PC-9 (cell line): ENCODE measurements at regions of chr9 and their contacts with region 1.

Region 1: DNA sequence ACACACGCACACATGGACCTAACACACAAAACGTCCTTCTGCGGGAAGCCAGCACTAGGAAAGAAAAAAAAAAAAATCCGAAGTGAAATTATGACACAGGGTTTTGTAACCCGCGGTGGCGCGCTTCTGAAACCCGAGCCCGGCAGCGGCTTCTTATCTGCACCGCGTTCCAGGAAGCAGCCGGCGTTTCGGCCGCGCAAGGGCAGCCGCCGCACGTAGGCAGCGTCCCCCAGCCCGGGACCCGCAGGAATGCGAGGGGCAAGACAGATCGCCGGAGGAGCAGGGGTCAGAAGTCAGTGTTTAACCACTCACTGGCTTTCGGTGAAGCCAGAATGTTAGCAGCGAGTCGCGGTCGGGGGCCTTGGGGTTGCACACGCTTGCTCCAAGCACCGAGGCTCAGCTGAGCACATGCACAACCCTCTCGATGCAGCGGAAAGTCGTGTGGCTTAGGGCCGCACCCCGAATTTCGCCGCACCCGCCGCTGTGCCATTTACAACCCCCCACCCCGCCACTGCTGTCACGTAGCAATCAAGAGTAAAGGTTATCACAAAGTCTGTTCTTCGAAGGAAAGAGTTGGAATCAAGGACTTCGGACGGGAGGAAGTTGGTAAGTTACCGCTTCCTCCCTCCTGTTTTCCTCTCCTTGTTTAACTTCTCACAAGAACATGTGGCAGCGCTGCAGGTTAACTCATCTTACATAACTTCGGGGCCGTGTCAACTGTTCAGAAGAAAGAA is 167.9 kb downstream of the AUH start:
- DNase-seq: peak; percentile 85 to 86
- H3K4me3 ChIP-seq: peak overlapping the region; percentile 66
- H3K27ac ChIP-seq: peak overlapping the region; percentile 99
- H3K4me1 ChIP-seq: peaks cover 63% of the 10 kb centered on the region
- H3K27me3 ChIP-seq: no peaks in the 10 kb centered on the region
- CTCF ChIP-seq: no peak; the same call in 1 of the 2 replicates

Region 2: DNA sequence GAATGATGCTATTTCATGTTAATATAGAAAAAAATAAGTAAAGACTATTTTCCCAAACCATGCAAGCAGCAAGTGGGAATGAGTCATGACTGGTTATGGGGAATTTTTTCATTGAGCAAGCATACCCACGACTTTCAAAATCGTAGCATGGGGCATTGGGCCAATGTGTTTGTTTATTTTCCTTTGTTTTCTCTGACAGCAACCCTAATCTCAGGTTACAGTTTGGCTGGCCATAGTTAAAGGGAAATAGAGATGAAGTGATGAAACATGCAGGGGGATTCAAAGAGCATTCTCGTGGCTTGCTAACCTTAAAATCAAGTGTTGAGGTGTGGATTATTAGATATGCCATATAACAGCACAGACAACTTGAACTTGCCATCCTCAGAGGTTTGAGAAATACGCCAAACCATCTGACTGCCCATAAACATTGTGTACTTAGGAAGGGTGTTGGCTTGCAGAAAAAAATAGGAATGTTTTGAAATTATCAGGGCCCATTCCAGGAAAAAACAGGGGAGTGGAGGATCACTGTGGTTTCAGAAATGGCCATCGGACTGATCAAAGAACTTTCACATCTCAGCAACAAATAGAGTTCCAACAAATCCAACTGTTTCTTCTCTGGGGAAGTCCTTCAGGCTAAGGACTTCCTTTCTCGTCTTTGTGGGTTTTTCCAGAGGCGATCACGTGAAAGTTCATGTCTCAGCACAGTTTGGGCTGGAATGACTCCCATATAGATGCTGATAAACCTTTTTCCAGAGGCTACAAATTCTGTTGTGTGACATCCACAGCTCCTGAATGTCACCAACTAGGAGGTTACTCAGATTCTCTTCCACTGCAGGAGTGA is 133.1 kb before region 1 on chr9:
- CTCF ChIA-PET with region 1: no interaction called
- POLR2A ChIA-PET with region 1: no interaction called
- intact Hi-C with region 1: loop called (anchors 1 kb)
- DNase-seq: peak; percentile 78 to 93
- H3K4me3 ChIP-seq: peak overlapping the region; percentile 35; the same call in 1 of the 2 replicates
- H3K27ac ChIP-seq: peak overlapping the region; percentile 86
- H3K4me1 ChIP-seq: peaks cover 48% of the 10 kb centered on the region
- H3K27me3 ChIP-seq: no peaks in the 10 kb centered on the region
- CTCF ChIP-seq: no peak

Region 3: GRCh38 chr9:91164724-91165520 is 28.9 kb before region 1 on chr9:
- CTCF ChIA-PET with region 1: no interaction called
- POLR2A ChIA-PET with region 1: no interaction called
- intact Hi-C with region 1: loop called (anchors 1 kb)
- DNase-seq: peak; percentile 91 to 92
- H3K4me3 ChIP-seq: no peak overlapping the region
- H3K27ac ChIP-seq: peak overlapping the region; percentile 51; the same call in 1 of the 2 replicates
- H3K4me1 ChIP-seq: peaks cover 59% of the 10 kb centered on the region
- H3K27me3 ChIP-seq: no peaks in the 10 kb centered on the region
- CTCF ChIP-seq: no peak

Region 4: DNA sequence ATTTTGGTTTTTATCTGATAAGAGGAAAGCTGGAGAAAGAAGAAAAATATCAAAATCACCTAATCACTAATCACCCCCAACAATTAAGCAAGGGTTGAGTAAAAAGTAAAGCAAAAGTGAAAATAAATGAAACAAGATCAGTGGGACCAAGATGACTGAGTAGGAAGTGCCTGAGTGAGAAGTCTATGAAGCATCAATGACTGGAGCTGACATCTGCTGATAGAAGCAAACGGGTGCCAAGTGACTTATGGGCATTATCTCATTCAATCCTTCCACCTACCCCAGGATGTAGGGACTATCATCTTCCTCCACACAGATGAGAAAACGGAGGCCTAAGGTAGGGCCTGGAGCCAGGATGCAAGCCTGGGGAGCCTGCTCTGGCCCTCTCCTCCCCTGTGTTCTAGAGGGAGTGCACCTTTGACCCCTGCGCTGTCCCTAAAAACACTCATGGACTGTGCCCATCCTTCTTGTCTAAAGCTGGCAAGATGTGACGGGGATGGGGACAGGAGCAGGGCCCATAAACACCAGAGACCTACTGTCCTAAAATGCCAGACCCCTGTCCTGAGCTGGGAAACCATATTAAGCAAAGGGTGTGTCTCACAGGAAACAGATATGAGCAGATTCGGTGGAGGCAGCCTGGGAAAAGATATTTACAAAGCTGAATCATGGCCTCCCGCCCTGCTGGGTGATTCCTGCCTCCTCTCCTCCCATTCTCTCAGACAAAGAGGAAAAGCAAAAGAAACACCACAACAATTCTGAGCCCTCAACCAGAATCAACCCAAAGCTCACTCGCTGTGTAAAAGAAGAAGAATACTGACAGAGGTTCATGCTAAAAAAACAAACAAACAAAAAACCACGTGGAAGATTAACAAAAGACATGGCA is 51.8 kb after region 1 on chr9:
- CTCF ChIA-PET with region 1: no interaction called
- POLR2A ChIA-PET with region 1: interaction called, 22 read pairs
- intact Hi-C with region 1: no loop called
- DNase-seq: peak in 1 of 2 experiments; percentile 19
- H3K4me3 ChIP-seq: no peak overlapping the region
- H3K27ac ChIP-seq: peak overlapping the region; percentile 56
- H3K4me1 ChIP-seq: peaks cover 15% of the 10 kb centered on the region
- H3K27me3 ChIP-seq: no peaks in the 10 kb centered on the region
- CTCF ChIP-seq: no peak

Region 5: DNA sequence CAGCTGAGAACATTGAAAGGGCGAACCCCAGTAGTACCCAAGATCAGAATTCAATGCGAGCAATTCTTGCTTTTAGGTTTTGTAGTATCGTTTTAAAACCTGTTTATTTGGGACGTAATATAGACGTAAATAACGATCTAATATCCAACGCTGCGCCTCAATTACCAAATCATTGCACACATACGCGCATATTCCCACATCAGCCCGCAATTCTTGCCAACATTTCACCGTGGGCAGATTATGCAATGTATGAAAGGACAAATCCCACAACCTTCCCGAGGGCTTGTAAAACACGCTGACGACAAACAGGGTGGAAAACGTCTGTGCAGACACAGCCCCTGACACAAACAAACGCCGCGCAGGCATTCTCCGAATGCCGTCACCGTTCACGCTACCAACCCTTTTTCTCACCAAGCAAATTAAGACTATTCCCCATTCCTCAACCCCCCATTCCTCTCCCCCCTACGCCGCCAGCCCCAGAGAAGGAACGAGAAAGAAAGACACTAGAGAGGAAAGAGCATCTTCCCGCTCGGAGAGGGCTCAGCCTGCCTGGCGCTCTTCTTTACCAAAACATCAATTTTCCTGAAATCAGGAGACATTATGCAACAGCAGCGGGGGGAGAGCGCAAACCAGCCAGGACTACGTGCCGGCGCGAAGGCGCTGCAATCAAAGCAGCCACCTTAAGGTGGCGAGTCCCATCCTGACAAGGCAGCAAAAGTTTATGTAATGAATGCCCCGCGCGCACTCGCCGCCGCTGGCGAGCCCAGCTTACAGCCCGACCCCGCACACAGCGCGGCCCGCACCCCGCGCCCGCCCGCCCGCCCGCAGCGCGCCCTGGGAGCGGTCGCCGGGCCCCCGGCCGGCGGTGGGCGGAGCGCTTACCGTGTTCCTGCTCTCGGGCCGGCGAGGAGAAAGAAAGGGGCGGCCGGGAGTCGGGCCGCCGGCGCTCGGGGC is 229.2 kb after region 1 on chr9:
- CTCF ChIA-PET with region 1: no interaction called
- POLR2A ChIA-PET with region 1: interaction called, 7 read pairs
- intact Hi-C with region 1: loop called (anchors 1 kb)
- DNase-seq: peak; percentile 57 to 65
- H3K4me3 ChIP-seq: peak overlapping the region; percentile 91
- H3K27ac ChIP-seq: peak overlapping the region; percentile 71
- H3K4me1 ChIP-seq: peaks cover 49% of the 10 kb centered on the region
- H3K27me3 ChIP-seq: no peaks in the 10 kb centered on the region
- CTCF ChIP-seq: no peak

Region 6: DNA sequence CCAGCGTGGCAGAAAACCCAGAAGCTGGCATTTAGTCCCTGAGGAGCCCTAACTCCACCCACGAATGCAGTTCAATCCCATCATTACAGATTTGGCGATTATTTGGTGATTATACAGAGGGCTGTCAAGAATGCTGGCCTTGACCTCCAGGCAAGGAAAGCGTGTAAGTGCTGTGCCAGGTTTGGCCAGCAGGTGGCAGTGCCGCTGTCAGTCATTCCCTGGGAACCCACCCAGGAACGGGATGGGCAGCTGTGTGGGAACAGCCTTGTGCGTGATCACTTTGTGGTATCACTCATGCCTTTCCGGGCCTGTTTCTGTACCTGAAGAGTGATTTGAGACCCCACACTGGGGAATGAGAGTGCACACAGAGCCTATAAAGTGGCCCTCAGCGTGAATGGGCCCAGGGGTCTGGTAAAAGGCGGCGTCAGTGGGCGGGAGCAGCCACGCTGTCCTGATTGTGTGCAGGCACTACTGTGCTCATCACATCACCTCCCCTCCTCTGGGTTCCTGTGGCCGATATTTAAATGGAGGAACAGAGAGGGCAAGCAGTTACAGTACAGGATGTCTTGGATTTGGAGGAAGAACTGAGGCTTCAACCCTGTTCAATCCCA is 540.7 kb after region 1 on chr9:
- CTCF ChIA-PET with region 1: no interaction called
- POLR2A ChIA-PET with region 1: no interaction called
- intact Hi-C with region 1: no loop called
- DNase-seq: peak in 1 of 2 experiments; percentile 51
- H3K4me3 ChIP-seq: no peak overlapping the region
- H3K27ac ChIP-seq: no peak overlapping the region
- H3K4me1 ChIP-seq: no peaks in the 10 kb centered on the region
- H3K27me3 ChIP-seq: peaks cover 37% of the 10 kb centered on the region; the same call in 1 of the 2 replicates
- CTCF ChIP-seq: peak; percentile 96